CD14-positive monocyte (primary cell): ENCODE measurements at regions of chr11 and their contacts with region 1.

Region 1: DNA sequence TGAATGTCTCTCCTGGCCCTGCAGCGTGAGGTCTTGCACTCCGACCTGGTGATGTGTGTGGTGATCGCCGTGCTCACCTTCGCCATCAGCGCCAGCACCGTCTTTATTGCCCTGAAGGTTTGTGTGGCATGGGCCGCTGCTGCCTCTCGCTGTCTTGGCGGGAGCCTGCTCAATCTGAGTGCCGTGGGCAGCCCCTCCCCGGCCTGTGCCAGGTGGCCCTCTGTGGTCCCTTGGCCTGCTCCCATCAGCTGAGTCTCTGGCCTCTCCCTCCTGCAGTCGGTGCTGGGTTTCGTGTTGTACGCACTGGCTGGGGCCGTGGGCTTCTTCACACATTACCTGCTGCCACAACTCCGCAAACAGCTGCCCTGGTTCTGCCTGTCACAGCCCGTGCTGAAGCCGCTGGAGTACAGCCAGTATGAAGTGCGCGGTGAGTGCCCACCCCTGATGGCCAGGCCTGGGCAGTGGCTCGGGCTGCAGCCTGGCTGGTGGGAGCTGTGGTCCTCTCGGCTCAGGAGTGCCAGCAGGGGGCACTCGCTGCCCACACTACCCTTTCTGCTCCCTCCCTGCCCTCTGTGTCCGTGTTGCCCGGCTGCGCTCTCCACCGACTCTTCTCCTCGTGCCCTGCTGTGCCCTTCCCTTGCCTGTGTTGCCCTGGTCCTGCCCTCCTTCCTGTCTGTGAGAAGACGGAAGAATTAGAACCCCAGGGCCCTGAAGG is 10.2 kb downstream of the PCNX3 start:
- DNase-seq: peak; percentile 72 to 78 (median 77)
- H3K4me3 ChIP-seq: no peak overlapping the region
- H3K4me3 Mint-ChIP-seq: no peak overlapping the region
- H3K27ac ChIP-seq: no peak overlapping the region
- H3K27ac Mint-ChIP-seq: peak overlapping the region in 4 of 7 donors; percentile 51 to 81 (median 62)
- H3K4me1 ChIP-seq: peaks cover 3 to 7% of the 10 kb centered on the region in 2 donors
- H3K4me1 Mint-ChIP-seq: peaks cover 6% of the 10 kb centered on the region
- H3K27me3 ChIP-seq: no peaks in the 10 kb centered on the region
- H3K27me3 Mint-ChIP-seq: no peaks in the 10 kb centered on the region
- CTCF ChIP-seq: peak; percentile 90

Region 2: GRCh38 chr11:65639623-65640482 is 14.1 kb after region 1 on chr11:
- intact Hi-C with region 1: no loop called
- DNase-seq: peak in 2 of 3 donors; percentile 39 to 40
- H3K4me3 ChIP-seq: peak overlapping the region; percentile 61 to 99 (median 76)
- H3K4me3 Mint-ChIP-seq: peak overlapping the region; percentile 94
- H3K27ac ChIP-seq: peak overlapping the region; percentile 93 to 98
- H3K27ac Mint-ChIP-seq: peak overlapping the region; percentile 91 to 94 (median 93)
- H3K4me1 ChIP-seq: peaks cover 44 to 72% of the 10 kb centered on the region in 2 donors
- H3K4me1 Mint-ChIP-seq: peaks cover 56% of the 10 kb centered on the region
- H3K27me3 ChIP-seq: no peaks in the 10 kb centered on the region
- H3K27me3 Mint-ChIP-seq: no peaks in the 10 kb centered on the region
- CTCF ChIP-seq: no peak

Region 3: GRCh38 chr11:65662799-65663638 is 37.2 kb after region 1 on chr11 and contains the start of gene RELA:
- intact Hi-C with region 1: loop called in 1 of 2 experiments (anchors 5 kb)
- DNase-seq: peak; percentile 87 to 96 (median 89)
- H3K4me3 ChIP-seq: peak within 1 kb of the TSS; percentile 85 to 90 (median 85)
- H3K4me3 Mint-ChIP-seq: peak within 1 kb of the TSS; percentile 86 to 91
- H3K27ac ChIP-seq: peak within 1 kb of the TSS; percentile 95 to 99
- H3K27ac Mint-ChIP-seq: peak within 1 kb of the TSS; percentile 90 to 98 (median 97)
- H3K4me1 ChIP-seq: peaks cover 26 to 27% of the 10 kb centered on the region in 2 donors
- H3K4me1 Mint-ChIP-seq: peaks cover 21% of the 10 kb centered on the region
- H3K27me3 ChIP-seq: no peaks in the 10 kb centered on the region
- H3K27me3 Mint-ChIP-seq: peaks cover 0 to 2% (median 0%) of the 10 kb centered on the region in 3 donors
- CTCF ChIP-seq: no peak
- polyA plus RNA-seq, gene RELA: 21.3 to 67.9 (median 30.9) TPM

Region 4: DNA sequence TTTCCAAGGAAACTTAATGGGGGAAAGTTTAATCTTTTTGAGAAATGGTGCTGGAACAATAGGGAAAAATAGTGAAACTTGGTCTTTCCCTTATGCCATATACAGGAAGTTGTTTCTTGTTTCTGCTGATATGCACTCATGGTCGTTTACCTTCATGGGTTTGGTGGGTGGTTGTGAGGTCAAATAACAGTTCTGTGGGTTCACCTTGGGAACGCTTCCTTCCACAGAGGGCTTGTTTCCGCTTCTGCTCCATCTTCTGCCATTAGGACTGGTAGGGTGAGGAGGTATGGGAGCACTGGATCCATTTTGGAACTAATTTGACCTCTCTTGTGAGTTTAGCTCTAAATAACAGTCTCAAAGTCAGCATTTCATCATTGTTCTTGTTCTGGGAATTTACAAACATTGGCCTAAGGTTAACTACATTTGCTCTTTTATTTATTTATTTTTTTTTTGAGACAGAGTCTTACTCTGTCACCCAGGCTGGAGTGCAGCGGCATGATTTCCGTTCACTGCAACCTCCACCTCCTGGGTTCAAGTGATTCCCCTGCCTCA is 54.5 kb after region 1 on chr11:
- intact Hi-C with region 1: no loop called
- DNase-seq: no peak
- H3K4me3 ChIP-seq: no peak overlapping the region
- H3K4me3 Mint-ChIP-seq: no peak overlapping the region
- H3K27ac ChIP-seq: no peak overlapping the region
- H3K27ac Mint-ChIP-seq: no peak overlapping the region
- H3K4me1 ChIP-seq: no peaks in the 10 kb centered on the region
- H3K4me1 Mint-ChIP-seq: no peaks in the 10 kb centered on the region
- H3K27me3 ChIP-seq: no peaks in the 10 kb centered on the region
- H3K27me3 Mint-ChIP-seq: peaks cover 0 to 5% (median 3%) of the 10 kb centered on the region in 3 donors
- CTCF ChIP-seq: no peak

Region 5: DNA sequence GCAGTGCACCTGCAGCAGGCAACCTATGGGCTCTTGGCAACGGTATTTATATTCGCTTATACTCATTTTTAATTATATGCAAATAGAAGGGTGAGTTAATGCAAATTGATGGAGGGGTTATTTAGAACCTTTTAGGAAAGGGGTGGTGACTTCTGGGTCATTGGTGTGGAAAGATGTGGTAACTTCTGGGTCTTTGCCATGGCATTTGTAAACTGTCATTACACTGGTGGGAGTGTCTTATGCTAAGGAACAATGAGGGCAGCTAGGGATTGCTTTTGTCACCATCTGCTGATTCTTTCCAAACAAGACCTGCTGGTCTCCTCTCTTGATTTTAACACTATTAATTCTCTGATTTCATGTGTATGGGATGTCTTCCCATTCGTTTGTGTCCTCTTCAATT is 74.6 kb after region 1 on chr11:
- intact Hi-C with region 1: loop called in 1 of 2 experiments (anchors 10 kb)
- DNase-seq: no peak
- H3K4me3 ChIP-seq: no peak overlapping the region
- H3K4me3 Mint-ChIP-seq: no peak overlapping the region
- H3K27ac ChIP-seq: no peak overlapping the region
- H3K27ac Mint-ChIP-seq: no peak overlapping the region
- H3K4me1 ChIP-seq: no peaks in the 10 kb centered on the region
- H3K4me1 Mint-ChIP-seq: peaks cover 6% of the 10 kb centered on the region
- H3K27me3 ChIP-seq: no peaks in the 10 kb centered on the region
- H3K27me3 Mint-ChIP-seq: peaks cover 0 to 3% (median 1%) of the 10 kb centered on the region in 3 donors
- CTCF ChIP-seq: no peak

Region 6: GRCh38 chr11:65817835-65818742 is 192.3 kb after region 1 on chr11:
- intact Hi-C with region 1: loop called in 1 of 2 experiments (anchors 10 kb)
- DNase-seq: peak; percentile 87 to 94 (median 88)
- H3K4me3 ChIP-seq: peak overlapping the region; percentile 45 to 80 (median 77)
- H3K4me3 Mint-ChIP-seq: peak overlapping the region; percentile 74 to 87
- H3K27ac ChIP-seq: peak overlapping the region; percentile 65 to 84
- H3K27ac Mint-ChIP-seq: peak overlapping the region; percentile 72 to 88 (median 83)
- H3K4me1 ChIP-seq: peaks cover 32 to 39% of the 10 kb centered on the region in 2 donors
- H3K4me1 Mint-ChIP-seq: peaks cover 50% of the 10 kb centered on the region
- H3K27me3 ChIP-seq: no peaks in the 10 kb centered on the region
- H3K27me3 Mint-ChIP-seq: peaks cover 0 to 1% (median 0%) of the 10 kb centered on the region in 3 donors
- CTCF ChIP-seq: peak; percentile 100

Region 7: DNA sequence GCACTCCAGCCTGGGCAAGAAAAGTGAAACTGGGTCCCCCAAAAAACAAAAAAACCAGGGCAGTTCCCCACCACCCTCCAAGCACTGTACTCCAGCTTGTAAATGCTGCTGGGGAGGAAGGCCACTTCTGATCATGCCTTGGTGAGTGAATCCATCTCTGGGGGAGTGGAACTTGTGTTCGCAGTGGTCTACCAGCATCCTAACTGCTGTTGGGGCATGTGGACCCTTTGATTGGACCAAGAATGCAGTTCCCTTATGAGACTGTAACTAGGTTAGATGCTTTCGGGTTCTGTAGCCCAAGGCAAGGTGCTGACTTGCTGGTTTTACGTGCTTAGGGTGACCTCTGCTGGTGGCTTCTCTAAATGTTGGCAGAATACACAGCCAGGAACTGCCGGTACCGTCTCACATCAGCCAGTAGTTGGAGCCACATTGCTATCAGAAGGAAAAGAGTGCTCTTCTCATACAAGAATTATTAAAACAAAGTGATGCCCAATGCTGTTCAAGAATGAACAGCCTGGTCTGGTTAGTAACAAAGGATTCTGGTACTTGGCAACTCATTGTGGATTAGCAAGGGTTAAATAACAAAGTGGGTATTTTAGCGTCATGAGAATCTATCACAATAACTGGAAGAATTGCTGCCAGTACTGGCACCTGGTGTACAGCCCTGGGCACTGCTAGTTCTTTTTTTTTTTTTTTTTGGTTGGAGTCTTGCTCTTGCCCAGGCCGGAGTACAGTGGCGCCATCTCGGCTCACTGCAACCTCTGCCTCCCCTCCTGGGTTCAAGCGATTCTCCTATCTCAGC is 363.2 kb after region 1 on chr11:
- intact Hi-C with region 1: loop called (anchors 2 to 10 kb)
- DNase-seq: peak; percentile 90 to 92 (median 90)
- H3K4me3 ChIP-seq: no peak overlapping the region
- H3K4me3 Mint-ChIP-seq: no peak overlapping the region
- H3K27ac ChIP-seq: peak overlapping the region; percentile 5 to 31
- H3K27ac Mint-ChIP-seq: peak overlapping the region; percentile 48 to 87 (median 75)
- H3K4me1 ChIP-seq: peaks cover 16 to 24% of the 10 kb centered on the region in 2 donors
- H3K4me1 Mint-ChIP-seq: peaks cover 12% of the 10 kb centered on the region
- H3K27me3 ChIP-seq: no peaks in the 10 kb centered on the region
- H3K27me3 Mint-ChIP-seq: no peaks in the 10 kb centered on the region
- CTCF ChIP-seq: peak; percentile 99

Region 8: DNA sequence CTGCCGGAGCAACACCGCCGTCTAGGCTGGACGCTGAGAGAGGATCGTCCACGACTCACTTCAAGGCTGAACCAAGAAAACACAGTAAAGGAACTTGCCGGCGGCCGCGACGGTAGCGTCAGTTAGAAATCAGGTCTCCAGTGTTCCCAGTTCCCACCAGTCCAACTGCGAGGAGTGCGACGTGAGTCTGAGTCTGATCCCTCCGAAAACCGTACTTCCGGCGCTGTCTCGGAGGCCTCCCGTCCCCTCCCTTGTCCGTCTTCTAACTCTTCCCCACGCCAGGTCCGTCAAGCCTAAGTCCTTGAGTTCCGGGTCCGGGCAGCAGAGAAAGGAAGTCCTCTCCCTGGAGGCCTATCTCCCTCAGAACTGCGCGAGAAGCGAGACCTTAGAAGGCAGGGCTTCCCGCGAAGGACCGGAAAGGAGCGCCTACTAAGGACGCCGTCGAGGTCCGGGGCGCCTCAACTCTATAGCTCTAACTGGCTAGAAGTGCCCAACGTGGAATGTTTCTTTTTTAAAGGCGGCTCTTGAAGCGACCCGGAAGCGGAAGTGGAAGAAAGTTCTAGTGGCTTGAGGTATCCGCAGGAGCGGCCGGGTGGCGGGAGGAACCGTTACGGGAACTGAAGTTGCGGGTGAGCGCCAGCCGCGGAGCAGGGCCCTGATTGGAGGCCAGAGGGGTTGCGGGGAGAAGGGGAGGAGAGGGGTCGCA is 376.3 kb after region 1 on chr11 and contains the starts of genes BANF1 and EIF1AD:
- intact Hi-C with region 1: loop called in 1 of 2 experiments (anchors 10 kb)
- DNase-seq: peak; percentile 91 to 97 (median 95)
- H3K4me3 ChIP-seq: peak within 1 kb of the TSS; percentile 62 to 97 (median 95)
- H3K4me3 Mint-ChIP-seq: peak within 1 kb of the TSS; percentile 97 to 98
- H3K27ac ChIP-seq: peak within 1 kb of the TSS; percentile 92 to 95
- H3K27ac Mint-ChIP-seq: peak within 1 kb of the TSS; percentile 98 to 100 (median 100)
- H3K4me1 ChIP-seq: peaks cover 16 to 27% of the 10 kb centered on the region in 2 donors
- H3K4me1 Mint-ChIP-seq: peaks cover 18% of the 10 kb centered on the region
- H3K27me3 ChIP-seq: no peaks in the 10 kb centered on the region
- H3K27me3 Mint-ChIP-seq: no peaks in the 10 kb centered on the region
- CTCF ChIP-seq: no peak
- polyA plus RNA-seq, gene BANF1: 79.9 to 175 (median 142) TPM
- polyA plus RNA-seq, gene EIF1AD: 16.4 to 23.1 (median 18.2) TPM

Region 9: GRCh38 chr11:66203847-66204246 is 578.1 kb after region 1 on chr11:
- intact Hi-C with region 1: no loop called
- DNase-seq: no peak
- H3K4me3 ChIP-seq: no peak overlapping the region
- H3K4me3 Mint-ChIP-seq: no peak overlapping the region
- H3K27ac ChIP-seq: no peak overlapping the region
- H3K27ac Mint-ChIP-seq: no peak overlapping the region
- H3K4me1 ChIP-seq: peaks cover under 1 to 1% of the 10 kb centered on the region in 2 donors
- H3K4me1 Mint-ChIP-seq: peaks cover 2% of the 10 kb centered on the region
- H3K27me3 ChIP-seq: no peaks in the 10 kb centered on the region
- H3K27me3 Mint-ChIP-seq: peaks cover 0 to 1% (median 0%) of the 10 kb centered on the region in 3 donors
- CTCF ChIP-seq: no peak